Activated T-helper 1 cell treated with anti-CD3 and anti-CD28 coated beads, Interleukin-12 subunit alpha, Interleukin-12 subunit beta, Interleukin-2, Interleukin-4 antibody, amounts not matched to agents 30 ng/mL and 10 ng/mL and 1 ng/mL, durations not matched to agents 14 hours and 24 hours and 36 hours (primary cell): ENCODE measurements at regions of chr4 and their contacts with region 1.

Region 1: DNA sequence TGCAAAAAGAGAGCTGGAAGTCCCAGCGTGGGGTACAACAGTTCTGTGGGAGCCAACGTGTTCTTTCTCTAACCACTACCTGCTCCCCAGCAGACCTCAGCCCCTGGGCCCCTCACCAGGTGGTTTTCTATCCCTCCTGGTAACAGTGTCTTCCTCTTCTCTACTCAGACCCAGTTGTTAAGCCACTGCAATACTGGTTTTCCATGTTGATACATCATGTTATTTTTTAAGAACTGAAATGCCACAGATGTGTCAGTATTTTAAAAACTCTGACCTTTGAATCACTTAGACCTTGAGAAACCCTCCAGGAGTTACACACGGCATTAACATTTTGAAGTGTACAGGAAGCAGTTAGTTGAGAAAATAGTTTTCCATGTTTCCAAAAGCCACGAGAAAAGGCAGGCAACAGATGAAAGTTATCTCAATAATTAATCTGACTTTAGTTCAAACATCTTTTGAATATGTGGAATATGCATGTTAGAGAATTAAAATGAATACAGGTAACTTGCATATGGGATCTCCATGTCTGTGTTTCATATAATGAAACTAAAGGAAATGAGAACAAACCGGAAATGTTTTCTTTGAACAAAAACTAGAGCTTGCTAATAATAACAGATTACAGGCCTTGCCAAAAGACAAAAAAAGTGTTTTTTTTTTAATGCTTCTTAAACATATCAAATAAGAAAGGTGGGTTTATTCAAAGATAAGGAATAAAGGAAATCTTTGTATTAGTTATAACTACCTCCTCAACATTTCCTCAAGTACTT is 108.8 kb downstream of the ZNF827 start:
- DNase-seq: no peak
- H3K4me3 Mint-ChIP-seq: peak overlapping the region; percentile 63
- H3K27ac Mint-ChIP-seq: peak overlapping the region; percentile 91
- H3K4me1 Mint-ChIP-seq: peaks cover 61% of the 10 kb centered on the region
- H3K27me3 Mint-ChIP-seq: no peaks in the 10 kb centered on the region

Region 2: DNA sequence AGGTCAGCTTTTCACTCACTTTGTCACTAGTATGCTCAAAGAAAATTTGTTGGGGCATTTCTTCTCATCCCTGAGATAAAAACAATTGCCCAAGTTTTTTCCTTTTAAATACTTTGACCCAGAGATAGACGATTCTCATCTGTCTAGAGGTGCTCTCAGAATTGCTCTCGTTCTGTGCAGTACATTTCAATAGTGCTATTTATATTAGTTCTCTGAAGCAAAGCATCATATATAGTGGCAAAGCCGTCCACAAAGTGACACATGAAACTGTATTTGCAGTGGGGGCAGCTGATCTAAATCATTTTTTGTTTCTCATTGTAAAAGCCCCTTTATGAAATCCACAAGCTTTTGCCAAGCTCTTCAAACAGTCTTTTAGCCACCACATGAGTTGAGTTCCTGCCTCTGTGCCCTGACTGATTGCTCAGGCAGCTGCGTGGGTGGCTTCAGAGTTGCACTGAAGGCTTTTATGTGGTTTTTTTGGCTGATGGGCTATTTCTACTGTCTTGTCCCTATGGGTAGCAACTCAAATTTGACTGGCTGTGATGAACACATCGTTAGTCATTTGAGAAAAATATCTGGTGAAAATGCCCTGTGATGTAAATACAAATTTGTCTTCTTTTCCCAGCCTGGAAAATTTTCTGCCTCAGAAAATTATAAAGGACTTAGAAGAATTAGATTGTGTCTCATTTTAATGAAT is 530.3 kb before region 1 on chr4:
- intact Hi-C with region 1: loop called (anchors 2 kb)
- DNase-seq: peak; percentile 2
- H3K4me3 Mint-ChIP-seq: no peak overlapping the region
- H3K27ac Mint-ChIP-seq: no peak overlapping the region
- H3K4me1 Mint-ChIP-seq: peaks cover 17% of the 10 kb centered on the region
- H3K27me3 Mint-ChIP-seq: peaks cover 6% of the 10 kb centered on the region

Region 3: DNA sequence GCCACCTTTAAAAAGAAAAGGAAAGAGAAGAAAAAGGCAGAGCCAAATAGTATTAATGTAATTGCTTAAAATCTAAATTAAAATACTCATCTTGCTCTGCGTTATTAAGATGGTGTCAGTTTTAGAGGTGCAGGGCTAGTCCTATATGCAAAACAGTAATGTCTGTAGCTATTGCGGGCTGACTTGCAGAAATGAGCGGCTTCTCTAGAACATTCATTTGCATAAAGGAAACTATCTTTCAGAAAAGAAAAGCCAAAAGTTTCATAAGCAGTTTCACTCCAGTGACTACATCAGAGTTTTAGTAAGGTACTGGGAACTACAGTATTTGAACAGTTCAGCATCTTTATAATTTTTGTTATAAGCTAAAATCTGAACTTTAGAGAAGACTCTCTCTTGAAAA is 342.2 kb before region 1 on chr4:
- intact Hi-C with region 1: loop called (anchors 1 kb)
- DNase-seq: no peak
- H3K4me3 Mint-ChIP-seq: no peak overlapping the region
- H3K27ac Mint-ChIP-seq: no peak overlapping the region
- H3K4me1 Mint-ChIP-seq: peaks cover 10% of the 10 kb centered on the region
- H3K27me3 Mint-ChIP-seq: peaks cover 23% of the 10 kb centered on the region

Region 4: DNA sequence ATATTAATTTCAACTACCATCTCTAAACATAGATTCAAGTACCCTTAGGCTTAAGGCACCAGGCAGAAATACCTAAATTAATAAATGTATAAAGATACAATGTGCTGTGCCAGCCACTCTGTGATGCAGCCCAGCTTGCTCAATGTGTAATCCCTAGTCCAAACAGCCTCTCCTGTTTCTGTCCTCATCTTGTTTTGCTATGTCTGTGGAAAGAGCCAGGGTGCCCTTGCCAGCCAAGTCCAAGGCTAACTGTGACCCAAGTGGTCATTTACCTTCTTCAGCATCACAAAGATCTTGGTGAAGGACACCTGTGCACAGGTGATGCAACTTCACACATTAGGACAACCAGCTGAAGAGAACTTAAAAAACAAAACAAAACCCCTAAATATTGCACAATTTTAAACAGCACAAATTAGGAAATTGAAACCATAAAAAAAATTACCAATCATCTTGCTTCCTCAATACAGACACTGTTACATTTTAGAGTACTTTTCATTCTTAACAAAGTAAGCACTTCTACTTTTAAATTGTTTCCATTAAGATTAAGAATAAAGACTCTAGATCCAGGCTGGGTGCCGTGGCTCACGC is 60.3 kb before region 1 on chr4:
- intact Hi-C with region 1: loop called (anchors 5 kb)
- DNase-seq: no peak
- H3K4me3 Mint-ChIP-seq: no peak overlapping the region
- H3K27ac Mint-ChIP-seq: no peak overlapping the region
- H3K4me1 Mint-ChIP-seq: peaks cover 42% of the 10 kb centered on the region
- H3K27me3 Mint-ChIP-seq: no peaks in the 10 kb centered on the region

Region 5: DNA sequence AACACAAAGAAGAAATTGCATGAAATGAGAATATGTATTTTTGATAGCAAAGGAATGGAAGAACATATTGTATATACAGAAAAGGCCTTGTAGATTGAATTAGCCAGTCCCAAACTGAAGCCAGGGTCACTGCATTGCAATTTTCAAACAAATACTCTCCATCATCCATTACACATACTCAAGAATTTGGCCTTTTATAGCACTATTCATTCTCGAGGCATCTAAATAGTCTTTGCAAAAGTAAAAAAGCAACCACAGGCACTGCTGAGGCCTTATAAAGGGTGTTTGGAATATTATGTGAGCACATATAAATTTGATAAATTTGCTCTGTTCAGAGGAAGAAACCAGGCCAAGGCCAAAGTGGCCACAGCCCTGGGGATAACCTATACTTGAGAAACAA is 14.2 kb before region 1 on chr4:
- intact Hi-C with region 1: loop called (anchors 1 kb)
- DNase-seq: no peak
- H3K4me3 Mint-ChIP-seq: peak overlapping the region; percentile 43
- H3K27ac Mint-ChIP-seq: peak overlapping the region; percentile 86
- H3K4me1 Mint-ChIP-seq: peaks cover 51% of the 10 kb centered on the region
- H3K27me3 Mint-ChIP-seq: no peaks in the 10 kb centered on the region

Region 6: DNA sequence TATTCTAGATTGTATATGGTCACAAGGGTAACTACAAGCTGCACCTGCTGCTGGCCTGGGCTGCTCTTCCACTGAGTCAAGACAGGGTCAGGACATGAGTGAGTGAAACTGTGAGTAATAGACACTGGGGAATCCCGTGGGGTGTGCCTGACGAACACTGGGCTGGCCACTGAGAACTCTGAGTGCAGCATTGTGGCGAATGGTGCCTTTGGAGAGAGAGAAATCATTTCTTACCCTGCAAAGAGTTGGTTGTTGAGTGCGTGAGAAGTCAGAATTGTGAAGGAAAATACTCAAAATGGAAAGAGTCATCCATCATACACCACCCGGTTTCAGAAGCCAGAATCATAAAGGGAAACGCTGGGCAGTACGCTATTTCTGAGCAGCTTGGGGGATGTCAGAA is 302.6 kb after region 1 on chr4:
- intact Hi-C with region 1: loop called (anchors 1 kb)
- DNase-seq: peak; percentile 28
- H3K4me3 Mint-ChIP-seq: no peak overlapping the region
- H3K27ac Mint-ChIP-seq: peak overlapping the region; percentile 61
- H3K4me1 Mint-ChIP-seq: peaks cover 20% of the 10 kb centered on the region
- H3K27me3 Mint-ChIP-seq: peaks cover 8% of the 10 kb centered on the region